ENCODE measurements at regions of chr18 and their contacts with region 1.

Region 1: DNA sequence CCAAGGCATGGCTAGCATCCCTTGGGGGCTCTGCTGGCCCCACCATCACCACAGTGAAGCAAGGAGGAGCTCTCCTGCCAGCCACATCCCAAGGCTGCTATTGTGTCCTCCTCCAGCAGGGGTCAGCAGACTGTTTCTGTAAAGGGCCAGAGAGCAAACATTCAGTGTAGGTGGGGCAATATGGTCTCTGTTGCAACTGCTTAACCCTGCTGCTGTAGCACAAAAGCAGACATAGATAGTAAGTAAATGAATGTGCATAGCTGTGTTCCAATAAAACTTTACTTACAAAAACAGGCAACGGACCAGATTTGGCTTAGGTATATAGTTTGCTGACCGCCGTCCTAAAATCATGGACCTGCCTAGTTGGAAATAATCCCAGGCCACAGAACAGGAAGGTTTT is 36.4 kb upstream of the ZBTB7C start:
- DNase-seq: peak; percentile 57
- H3K4me3 Mint-ChIP-seq: no peak overlapping the region
- H3K27ac Mint-ChIP-seq: no peak overlapping the region
- H3K4me1 Mint-ChIP-seq: no peaks in the 10 kb centered on the region
- H3K27me3 Mint-ChIP-seq: peaks cover 34% of the 10 kb centered on the region

Region 2: GRCh38 chr18:48022531-48023329 is 422.8 kb before region 1 on chr18:
- intact Hi-C with region 1: loop called (anchors 2 kb)
- DNase-seq: no peak
- H3K4me3 Mint-ChIP-seq: no peak overlapping the region
- H3K27ac Mint-ChIP-seq: no peak overlapping the region
- H3K4me1 Mint-ChIP-seq: peaks cover 12% of the 10 kb centered on the region
- H3K27me3 Mint-ChIP-seq: peaks cover 11% of the 10 kb centered on the region

Region 3: GRCh38 chr18:48030616-48031480 is 414.7 kb before region 1 on chr18:
- intact Hi-C with region 1: loop called (anchors 1 kb)
- DNase-seq: no peak
- H3K4me3 Mint-ChIP-seq: no peak overlapping the region
- H3K27ac Mint-ChIP-seq: no peak overlapping the region
- H3K4me1 Mint-ChIP-seq: no peaks in the 10 kb centered on the region
- H3K27me3 Mint-ChIP-seq: no peaks in the 10 kb centered on the region

Region 4: GRCh38 chr18:48230467-48231113 is 214.9 kb before region 1 on chr18:
- intact Hi-C with region 1: loop called (anchors 1 kb)
- DNase-seq: no peak
- H3K4me3 Mint-ChIP-seq: no peak overlapping the region
- H3K27ac Mint-ChIP-seq: no peak overlapping the region
- H3K4me1 Mint-ChIP-seq: peaks cover 29% of the 10 kb centered on the region
- H3K27me3 Mint-ChIP-seq: peaks cover 8% of the 10 kb centered on the region

Region 5: GRCh38 chr18:48470484-48471180 is 25.1 kb after region 1 on chr18:
- intact Hi-C with region 1: loop called (anchors 1 kb)
- DNase-seq: no peak
- H3K4me3 Mint-ChIP-seq: no peak overlapping the region
- H3K27ac Mint-ChIP-seq: no peak overlapping the region
- H3K4me1 Mint-ChIP-seq: no peaks in the 10 kb centered on the region
- H3K27me3 Mint-ChIP-seq: peaks cover 15% of the 10 kb centered on the region